Lower lobe of right lung (tissue), 2 donors: ENCODE measurements at regions of chr1 and their contacts with region 1.

Region 1: GRCh38 chr1:70727886-70728489 is 316.9 kb downstream of the CTH start:
- DNase-seq: no peak
- ATAC-seq: peak in 1 of 2 donors; percentile 27
- H3K4me3 ChIP-seq: no peak overlapping the region
- H3K27ac ChIP-seq: no peak overlapping the region
- H3K4me1 ChIP-seq: no peaks in the 10 kb centered on the region
- H3K27me3 ChIP-seq: no peaks in the 10 kb centered on the region
- CTCF ChIP-seq: no peak

Region 2: GRCh38 chr1:70475023-70475422 is 253.0 kb before region 1 on chr1:
- intact Hi-C with region 1: no loop called
- DNase-seq: no peak
- ATAC-seq: no peak
- H3K4me3 ChIP-seq: no peak overlapping the region
- H3K27ac ChIP-seq: no peak overlapping the region
- H3K4me1 ChIP-seq: no peaks in the 10 kb centered on the region
- H3K27me3 ChIP-seq: no peaks in the 10 kb centered on the region
- CTCF ChIP-seq: no peak

Region 3: DNA sequence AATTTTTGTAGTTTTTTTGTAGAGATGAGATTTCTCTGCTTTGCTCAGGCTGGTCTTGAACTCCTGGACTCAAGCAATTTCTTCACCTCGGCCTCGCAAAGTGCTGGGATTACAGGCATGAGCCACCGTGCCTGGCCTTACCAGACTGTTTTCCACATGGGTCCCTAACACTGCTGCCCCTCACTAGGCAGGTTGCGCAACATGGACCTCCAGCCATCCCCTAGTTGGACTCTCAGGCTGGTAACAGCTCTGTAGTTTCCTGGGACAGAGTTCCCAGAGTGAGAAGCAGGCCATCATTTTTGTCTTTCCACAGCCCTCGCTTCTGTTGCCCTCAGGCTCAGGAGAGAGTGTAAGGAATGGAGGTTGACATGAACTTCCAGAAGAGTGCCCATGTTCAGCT is 160.8 kb before region 1 on chr1:
- intact Hi-C with region 1: loop called (anchors 10 kb)
- DNase-seq: no peak
- ATAC-seq: no peak
- H3K4me3 ChIP-seq: no peak overlapping the region
- H3K27ac ChIP-seq: no peak overlapping the region
- H3K4me1 ChIP-seq: no peaks in the 10 kb centered on the region
- H3K27me3 ChIP-seq: no peaks in the 10 kb centered on the region
- CTCF ChIP-seq: no peak